OCI-LY7 (cell line): ENCODE measurements at regions of chr12 and their contacts with region 1.

Region 1: GRCh38 chr12:53079226-53080117 is at the start of gene SPRYD3:
- DNase-seq: peak; percentile 96
- H3K4me3 ChIP-seq: peak within 1 kb of the TSS; percentile 78
- H3K27ac ChIP-seq: peak within 1 kb of the TSS; percentile 34
- H3K4me1 ChIP-seq: peaks cover 10% of the 10 kb centered on the region
- CTCF ChIP-seq: no peak
- total RNA-seq, gene SPRYD3: 7.3 and 10.9 TPM in 2 replicates

Region 2: GRCh38 chr12:53054112-53054833 is 25.2 kb before region 1 on chr12:
- CTCF ChIA-PET with region 1: no interaction called
- POLR2A ChIA-PET with region 1: interaction called, 6 read pairs
- intact Hi-C with region 1: loop called (anchors 1 kb)
- DNase-seq: peak; percentile 93
- H3K4me3 ChIP-seq: peak overlapping the region; percentile 75
- H3K27ac ChIP-seq: no peak overlapping the region
- H3K4me1 ChIP-seq: peaks cover 10% of the 10 kb centered on the region
- CTCF ChIP-seq: no peak

Region 3: GRCh38 chr12:53065975-53066931 is 13.2 kb before region 1 on chr12:
- CTCF ChIA-PET with region 1: interaction called, 7 read pairs
- POLR2A ChIA-PET with region 1: interaction called, 12 read pairs
- intact Hi-C with region 1: no loop called
- DNase-seq: peak; percentile 63
- H3K4me3 ChIP-seq: no peak overlapping the region
- H3K27ac ChIP-seq: no peak overlapping the region
- H3K4me1 ChIP-seq: no peaks in the 10 kb centered on the region
- CTCF ChIP-seq: peak; percentile 93

Region 4: DNA sequence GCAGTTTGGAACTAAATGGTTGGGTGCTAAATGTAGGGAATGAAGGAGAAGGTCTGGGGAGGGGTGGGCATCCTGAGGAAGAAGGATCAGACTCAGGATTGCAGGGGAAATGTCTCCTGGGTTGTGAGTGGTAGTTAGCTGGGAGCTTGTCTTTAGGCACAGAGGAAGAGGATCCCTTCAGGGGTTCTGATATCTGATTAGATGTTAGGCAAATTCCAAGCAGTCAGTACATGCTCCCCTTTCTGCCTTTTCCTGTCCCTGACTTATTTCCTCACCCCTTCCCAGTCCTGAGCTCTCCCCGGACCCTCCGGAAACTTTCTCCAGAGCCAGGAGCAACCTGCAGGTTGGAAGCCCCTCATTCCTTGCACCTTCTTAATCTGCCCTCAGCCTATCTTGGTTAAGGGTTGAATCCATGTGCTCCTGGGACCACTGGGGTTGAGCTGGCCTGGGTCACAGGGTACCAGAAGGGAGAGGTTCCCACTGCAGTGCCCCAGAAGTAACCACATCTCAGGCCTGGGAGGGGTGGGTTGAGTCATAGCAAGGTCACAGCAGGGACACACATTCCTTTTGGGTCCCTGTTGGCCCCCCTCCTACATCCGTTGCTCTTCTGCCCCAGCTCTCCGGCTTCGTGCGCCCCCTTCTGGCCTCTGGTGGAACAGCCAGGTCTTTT is 19.6 kb after region 1 on chr12:
- CTCF ChIA-PET with region 1: interaction called, 6 read pairs
- POLR2A ChIA-PET with region 1: interaction called, 29 read pairs
- intact Hi-C with region 1: no loop called
- DNase-seq: peak; percentile 77
- H3K4me3 ChIP-seq: no peak overlapping the region
- H3K27ac ChIP-seq: no peak overlapping the region
- H3K4me1 ChIP-seq: peaks cover 38% of the 10 kb centered on the region
- CTCF ChIP-seq: peak; percentile 96

Region 5: DNA sequence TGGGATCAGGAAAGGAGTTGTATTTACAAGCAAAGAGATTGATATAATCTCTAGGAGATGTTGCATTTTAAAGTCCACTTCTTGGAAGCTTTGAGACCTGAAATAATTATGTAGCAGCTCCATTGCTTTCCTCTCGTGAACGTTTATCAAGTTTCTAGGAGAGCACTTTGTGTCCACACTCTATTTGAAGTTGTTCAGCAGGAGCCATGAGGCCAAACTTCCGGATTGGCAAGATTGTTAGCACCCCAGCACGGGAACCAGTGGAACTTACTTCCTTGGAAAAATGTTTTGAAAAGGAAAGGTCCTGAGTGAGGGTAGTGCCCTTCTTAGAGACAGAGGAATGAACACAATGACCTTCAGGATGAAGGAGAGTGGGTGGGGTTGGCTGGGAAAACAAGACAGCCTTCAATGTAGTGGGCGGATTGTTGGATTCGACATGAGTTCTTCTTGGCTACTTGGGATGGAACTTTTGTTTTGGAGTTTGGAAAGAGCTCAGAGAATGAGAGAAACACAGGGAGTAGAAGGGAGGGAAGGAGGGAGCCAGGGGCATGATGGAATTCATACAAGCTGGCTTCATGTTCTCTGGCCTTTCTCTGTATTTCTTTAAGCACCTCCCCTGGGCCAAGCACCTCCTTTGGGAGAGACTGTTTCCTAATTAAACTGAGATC is 696.1 kb after region 1 on chr12:
- CTCF ChIA-PET with region 1: no interaction called
- POLR2A ChIA-PET with region 1: no interaction called
- intact Hi-C with region 1: no loop called
- DNase-seq: no peak
- H3K4me3 ChIP-seq: no peak overlapping the region
- H3K27ac ChIP-seq: no peak overlapping the region
- H3K4me1 ChIP-seq: peaks cover 3% of the 10 kb centered on the region
- CTCF ChIP-seq: no peak